Gastrocnemius medialis (tissue), 4 donors: ENCODE measurements at regions of chr12 and their contacts with region 1.

Region 1: GRCh38 chr12:26832822-26833742 is at the start of gene ITPR2:
- DNase-seq: peak; percentile 92 to 93
- ATAC-seq: peak; percentile 89 to 91
- H3K4me3 ChIP-seq: peak within 1 kb of the TSS; percentile 76 to 86 (median 79)
- H3K27ac ChIP-seq: peak within 1 kb of the TSS; percentile 88 to 96 (median 91)
- H3K4me1 ChIP-seq: peaks cover 5 to 15% of the 10 kb centered on the region in 2 donors
- H3K27me3 ChIP-seq: no peaks in the 10 kb centered on the region
- CTCF ChIP-seq: peak in 3 of 5 experiments; percentile 4 to 43 (median 32)
- POLR2A ChIP-seq: peak; percentile 92 to 93
- total RNA-seq, gene ITPR2: 3.8 to 23.8 (median 4.1) TPM

Region 2: GRCh38 chr12:25958428-25959070 is 874.5 kb before region 1 on chr12 and contains the start of gene RASSF8:
- in situ Hi-C with region 1: no loop called
- intact Hi-C with region 1: loop called (anchors 10 kb)
- DNase-seq: peak; percentile 40 to 65
- ATAC-seq: peak; percentile 84 to 88
- H3K4me3 ChIP-seq: peak within 1 kb of the TSS; percentile 83 to 92 (median 89)
- H3K27ac ChIP-seq: peak within 1 kb of the TSS; percentile 86 to 95 (median 94)
- H3K4me1 ChIP-seq: peaks cover 24 to 34% of the 10 kb centered on the region in 2 donors
- H3K27me3 ChIP-seq: no peaks in the 10 kb centered on the region
- CTCF ChIP-seq: no peak
- POLR2A ChIP-seq: peak; percentile 83 to 90
- total RNA-seq, gene RASSF8: 23.6 to 36.8 (median 28.0) TPM

Region 3: DNA sequence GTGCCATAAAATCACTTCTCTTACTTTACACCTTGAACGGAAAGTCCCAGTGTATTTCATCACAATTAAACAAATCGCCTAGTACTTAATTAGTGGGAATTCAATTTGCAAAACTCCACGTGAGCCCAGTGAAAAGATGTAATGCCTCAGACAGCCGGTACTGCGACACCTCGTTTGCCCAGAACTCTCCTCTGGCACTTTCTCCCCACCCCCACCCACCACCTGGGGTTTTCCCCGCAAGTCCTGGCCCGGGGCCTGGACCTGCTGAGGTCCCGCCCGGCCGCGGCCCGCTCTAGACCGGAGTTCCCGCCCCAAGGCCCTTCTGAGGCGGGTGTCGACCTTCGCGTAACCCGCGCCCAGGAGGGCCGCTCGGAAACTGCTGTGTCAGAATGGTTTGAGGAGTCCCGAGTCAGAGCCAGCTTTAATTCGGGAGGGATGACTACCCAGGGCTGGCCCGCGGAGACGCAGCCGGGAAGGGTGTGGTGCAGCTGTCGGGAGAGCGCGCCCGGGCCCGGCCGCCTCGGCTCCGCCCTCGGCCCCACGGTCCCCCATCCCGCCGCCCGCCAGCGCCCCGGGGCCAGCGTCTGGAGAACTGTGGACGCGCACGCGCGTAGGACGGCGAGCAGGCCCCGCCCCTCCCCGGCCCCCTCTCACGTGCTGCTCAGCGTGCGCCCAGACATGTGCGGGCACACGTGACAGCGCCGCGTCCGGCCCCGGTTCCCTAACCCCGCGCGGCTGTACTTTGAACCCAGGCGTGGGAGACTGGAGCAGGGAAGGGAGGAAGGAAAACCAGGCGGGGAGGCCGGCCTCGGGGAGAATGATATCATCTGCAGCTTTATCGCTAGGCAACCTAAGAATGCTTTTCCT is 719.0 kb before region 1 on chr12:
- in situ Hi-C with region 1: no loop called
- intact Hi-C with region 1: loop called (anchors 10 kb)
- DNase-seq: peak; percentile 94 to 98
- ATAC-seq: peak; percentile 53 to 63
- H3K4me3 ChIP-seq: peak overlapping the region; percentile 46 to 61 (median 50)
- H3K27ac ChIP-seq: peak overlapping the region; percentile 95 to 100 (median 97)
- H3K4me1 ChIP-seq: peaks cover 80 to 84% of the 10 kb centered on the region in 2 donors
- H3K27me3 ChIP-seq: no peaks in the 10 kb centered on the region
- CTCF ChIP-seq: peak; percentile 11 to 53 (median 38)
- POLR2A ChIP-seq: peak; percentile 89 to 96

Region 4: GRCh38 chr12:26845984-26846383 is 12.9 kb after region 1 on chr12:
- in situ Hi-C with region 1: no loop called
- intact Hi-C with region 1: loop called (anchors 1 kb)
- DNase-seq: no peak
- ATAC-seq: peak; percentile 30 to 52
- H3K4me3 ChIP-seq: no peak overlapping the region
- H3K27ac ChIP-seq: no peak overlapping the region
- H3K4me1 ChIP-seq: peaks cover 3 to 4% of the 10 kb centered on the region in 2 donors
- H3K27me3 ChIP-seq: no peaks in the 10 kb centered on the region
- CTCF ChIP-seq: no peak
- POLR2A ChIP-seq: no peak

Region 5: DNA sequence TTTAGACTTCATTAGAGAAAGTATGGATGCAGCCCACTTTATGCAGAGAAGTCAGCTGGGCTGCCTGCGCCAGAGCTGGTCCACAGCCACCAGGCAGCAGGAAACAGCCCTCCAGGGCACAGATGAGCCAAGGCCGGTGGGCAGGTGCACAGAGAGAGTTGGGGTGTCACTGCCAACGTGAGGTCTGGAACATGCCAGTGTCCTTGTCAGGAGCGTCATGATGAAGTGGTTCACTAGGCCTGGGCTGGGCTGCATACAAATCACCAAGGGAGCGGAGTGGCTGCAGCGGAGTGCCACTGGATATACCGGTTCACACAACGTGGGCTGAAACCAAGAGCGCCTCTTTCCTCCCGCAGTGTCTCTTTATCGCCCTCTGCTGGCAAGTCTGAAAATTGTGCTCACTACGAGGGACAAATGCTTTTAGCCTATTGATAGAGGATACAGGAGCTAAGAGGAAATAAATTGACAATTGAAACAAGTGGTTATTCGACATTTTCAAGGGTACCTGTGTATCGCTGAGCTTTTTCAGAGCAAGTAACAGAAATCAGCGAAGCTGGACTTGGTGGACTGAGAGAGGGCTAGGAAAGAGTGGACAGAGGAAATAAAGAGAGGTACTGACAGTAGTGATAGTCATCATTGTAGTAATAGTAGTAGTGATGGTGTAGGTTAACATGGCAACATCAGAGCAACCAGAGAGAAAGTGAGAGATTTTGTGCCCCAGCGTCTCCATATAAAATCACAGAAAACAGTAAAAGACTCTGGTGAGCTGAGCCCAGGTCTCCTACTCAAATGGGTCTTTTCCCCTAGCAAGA is 51.9 kb after region 1 on chr12:
- in situ Hi-C with region 1: no loop called
- intact Hi-C with region 1: loop called (anchors 10 kb)
- DNase-seq: peak; percentile 62 to 71
- ATAC-seq: peak; percentile 92 to 98
- H3K4me3 ChIP-seq: peak overlapping the region in 1 of 4 donors; percentile 29
- H3K27ac ChIP-seq: no peak overlapping the region
- H3K4me1 ChIP-seq: no peaks in the 10 kb centered on the region
- H3K27me3 ChIP-seq: no peaks in the 10 kb centered on the region
- CTCF ChIP-seq: peak; percentile 77 to 97 (median 90)
- POLR2A ChIP-seq: no peak

Region 6: GRCh38 chr12:26895672-26896071 is 62.6 kb after region 1 on chr12:
- in situ Hi-C with region 1: no loop called
- intact Hi-C with region 1: no loop called
- DNase-seq: no peak
- ATAC-seq: no peak
- H3K4me3 ChIP-seq: no peak overlapping the region
- H3K27ac ChIP-seq: no peak overlapping the region
- H3K4me1 ChIP-seq: no peaks in the 10 kb centered on the region
- H3K27me3 ChIP-seq: no peaks in the 10 kb centered on the region
- CTCF ChIP-seq: no peak
- POLR2A ChIP-seq: no peak

Region 7: DNA sequence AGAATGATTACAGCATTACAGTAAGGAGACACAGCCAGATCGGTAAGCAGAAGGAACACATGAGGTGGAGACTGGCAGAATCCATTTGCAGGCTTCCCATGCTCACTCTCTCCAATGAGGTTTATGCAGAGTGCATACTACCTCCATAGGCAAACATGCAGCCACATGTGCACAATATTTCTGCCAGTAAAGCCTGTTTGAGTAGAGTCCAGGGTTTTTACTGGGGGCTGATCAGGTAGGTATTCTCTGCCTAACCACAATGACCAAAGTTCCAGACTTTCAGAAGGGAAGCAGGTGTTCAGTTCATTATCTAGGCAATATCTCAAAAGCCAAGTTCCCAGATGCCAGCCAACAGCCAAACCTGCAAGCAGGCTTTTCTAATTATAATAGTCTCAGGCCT is 73.6 kb after region 1 on chr12:
- in situ Hi-C with region 1: no loop called
- intact Hi-C with region 1: no loop called
- DNase-seq: no peak
- ATAC-seq: no peak
- H3K4me3 ChIP-seq: no peak overlapping the region
- H3K27ac ChIP-seq: no peak overlapping the region
- H3K4me1 ChIP-seq: peaks cover 3 to 15% of the 10 kb centered on the region in 2 donors
- H3K27me3 ChIP-seq: no peaks in the 10 kb centered on the region
- CTCF ChIP-seq: no peak
- POLR2A ChIP-seq: no peak

Region 8: GRCh38 chr12:26937875-26938700 is 105.0 kb after region 1 on chr12 and contains the starts of genes FGFR1OP2 and INTS13:
- in situ Hi-C with region 1: no loop called
- intact Hi-C with region 1: loop called (anchors 2 kb)
- DNase-seq: peak; percentile 98
- ATAC-seq: peak; percentile 94
- H3K4me3 ChIP-seq: peak within 1 kb of the TSS; percentile 68 to 99 (median 90)
- H3K27ac ChIP-seq: peak within 1 kb of the TSS; percentile 94 to 97 (median 96)
- H3K4me1 ChIP-seq: peaks cover 57 to 69% of the 10 kb centered on the region in 2 donors
- H3K27me3 ChIP-seq: no peaks in the 10 kb centered on the region
- CTCF ChIP-seq: no peak
- POLR2A ChIP-seq: peak; percentile 95 to 96
- total RNA-seq, gene FGFR1OP2: 43.8 to 56.4 (median 45.9) TPM
- total RNA-seq, gene INTS13: 21.3 to 39.9 (median 32.7) TPM

Region 9: DNA sequence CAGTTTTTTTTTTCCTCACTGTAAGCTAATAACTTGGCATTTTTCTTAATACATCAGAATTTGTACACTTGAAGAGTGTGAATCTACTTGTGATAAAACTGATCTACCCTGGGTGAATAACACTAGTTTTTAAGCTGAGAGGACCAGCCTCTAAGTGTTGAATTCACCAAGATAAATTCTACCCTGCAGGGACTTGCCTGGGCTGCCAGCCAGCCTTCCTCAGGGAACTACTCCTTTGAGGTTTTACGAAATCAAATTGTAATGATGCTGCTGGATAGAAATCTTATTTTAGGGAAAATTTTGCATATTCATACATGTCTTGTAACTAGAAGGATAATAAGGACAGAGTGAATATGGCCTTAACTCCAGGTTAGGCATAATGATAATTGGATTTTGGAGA is 191.2 kb after region 1 on chr12:
- in situ Hi-C with region 1: no loop called
- intact Hi-C with region 1: loop called (anchors 5 kb)
- DNase-seq: no peak
- ATAC-seq: no peak
- H3K4me3 ChIP-seq: no peak overlapping the region
- H3K27ac ChIP-seq: no peak overlapping the region
- H3K4me1 ChIP-seq: peaks cover 18 to 23% of the 10 kb centered on the region in 2 donors
- H3K27me3 ChIP-seq: no peaks in the 10 kb centered on the region
- CTCF ChIP-seq: no peak
- POLR2A ChIP-seq: no peak

Region 10: GRCh38 chr12:28814246-28814645 is 1981.2 kb after region 1 on chr12:
- in situ Hi-C with region 1: no loop called
- intact Hi-C with region 1: no loop called
- DNase-seq: no peak
- ATAC-seq: no peak
- H3K4me3 ChIP-seq: no peak overlapping the region
- H3K27ac ChIP-seq: no peak overlapping the region
- H3K4me1 ChIP-seq: no peaks in the 10 kb centered on the region
- H3K27me3 ChIP-seq: no peaks in the 10 kb centered on the region
- CTCF ChIP-seq: no peak
- POLR2A ChIP-seq: no peak